GM10248 (cell line): ENCODE measurements at regions of chr9 and their contacts with region 1.

Region 1: GRCh38 chr9:19174127-19174912 is 47.0 kb upstream of the PLIN2 start:
- DNase-seq: peak; percentile 77
- CTCF ChIP-seq: peak; percentile 47

Region 2: GRCh38 chr9:19048966-19049916 is 125.1 kb before region 1 on chr9 and contains the start of gene RRAGA:
- CTCF ChIA-PET with region 1: interaction called, 28 read pairs
- POLR2A ChIA-PET with region 1: interaction called, 4 read pairs
- DNase-seq: peak; percentile 96
- CTCF ChIP-seq: peak; percentile 76

Region 3: GRCh38 chr9:19130436-19130835 is 43.9 kb before region 1 on chr9:
- CTCF ChIA-PET with region 1: interaction called, 27 read pairs
- POLR2A ChIA-PET with region 1: interaction called, 3 read pairs
- DNase-seq: no peak
- CTCF ChIP-seq: no peak

Region 4: DNA sequence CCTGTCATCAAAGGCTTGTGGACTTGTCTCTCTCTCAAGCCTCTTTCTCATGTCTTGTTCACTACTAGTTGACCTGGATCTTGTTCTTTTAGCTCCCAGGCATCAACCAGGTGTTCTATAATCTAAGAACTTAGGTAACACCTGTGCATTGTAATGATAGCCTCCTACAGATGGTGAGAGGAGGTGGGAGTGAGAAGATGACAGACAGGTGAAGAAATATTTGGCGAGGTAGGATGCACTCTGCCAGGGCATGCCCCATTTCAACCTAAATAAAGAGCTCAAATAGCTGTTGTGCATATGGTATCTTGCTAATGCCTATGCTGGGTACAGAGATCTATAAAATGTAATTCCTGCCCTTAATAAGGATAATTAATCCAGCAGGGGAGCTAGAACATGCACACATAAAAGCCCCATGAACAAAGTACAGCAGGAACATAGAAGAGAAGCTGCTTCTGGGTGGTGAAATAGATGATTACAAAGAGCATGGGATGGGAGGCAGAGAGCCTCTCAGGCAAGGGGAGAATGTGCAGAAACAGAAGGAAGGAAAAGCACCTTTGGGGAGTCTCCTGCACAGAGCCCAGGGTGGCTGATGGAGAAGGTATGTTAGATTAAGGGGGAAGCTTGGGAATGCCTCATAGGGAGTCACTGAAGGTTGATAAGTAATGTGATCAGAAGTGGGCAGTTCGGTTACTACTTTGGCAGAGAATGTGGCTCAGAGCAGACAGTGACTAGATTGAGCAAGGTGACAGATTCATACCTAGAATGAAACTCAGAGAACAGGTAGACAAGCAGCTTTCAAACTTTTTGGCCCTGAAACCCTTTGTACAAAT is 19.0 kb before region 1 on chr9:
- CTCF ChIA-PET with region 1: interaction called, 20 read pairs
- POLR2A ChIA-PET with region 1: no interaction called
- DNase-seq: no peak
- CTCF ChIP-seq: no peak

Region 5: GRCh38 chr9:19184144-19184917 is 10.0 kb after region 1 on chr9:
- CTCF ChIA-PET with region 1: interaction called, 22 read pairs
- POLR2A ChIA-PET with region 1: no interaction called
- DNase-seq: peak; percentile 81
- CTCF ChIP-seq: no peak

Region 6: DNA sequence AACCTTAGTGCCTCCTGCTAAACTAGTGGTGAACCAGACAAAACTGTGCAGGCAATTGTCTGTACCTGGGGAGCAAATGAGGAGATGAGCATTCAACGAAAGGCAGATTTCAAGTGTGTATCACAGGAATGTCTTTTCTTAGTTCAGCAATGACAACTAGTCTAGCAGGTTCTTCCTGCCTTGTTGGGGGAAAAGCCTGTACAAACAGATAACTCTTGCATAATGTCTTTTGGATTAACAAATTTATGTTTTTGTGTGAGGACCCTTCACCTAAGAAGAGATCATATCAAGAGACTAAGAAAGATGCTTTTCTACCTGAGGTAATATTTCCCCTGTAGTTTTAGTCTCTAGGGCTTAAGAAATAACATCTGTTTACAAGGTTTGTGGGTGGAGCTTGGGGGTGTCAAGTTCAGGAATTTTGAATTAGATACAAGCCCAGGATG is 34.4 kb after region 1 on chr9:
- CTCF ChIA-PET with region 1: no interaction called
- POLR2A ChIA-PET with region 1: no interaction called
- DNase-seq: no peak
- CTCF ChIP-seq: no peak